ENCODE measurements at regions of chr10 and their contacts with region 1.

Region 1: GRCh38 chr10:26556748-26557640 is 118.9 kb downstream of the APBB1IP start:
- DNase-seq: peak in 2 of 10 donors; percentile 6 to 36
- H3K4me3 ChIP-seq: no peak overlapping the region
- H3K27ac ChIP-seq: peak overlapping the region in 2 of 59 donors; percentile 12 to 36
- H3K27me3 ChIP-seq: peaks cover 0 to 44% (median 4%) of the 10 kb centered on the region in 45 donors
- CTCF ChIP-seq: peak; percentile 60 to 93 (median 82)

Region 2: DNA sequence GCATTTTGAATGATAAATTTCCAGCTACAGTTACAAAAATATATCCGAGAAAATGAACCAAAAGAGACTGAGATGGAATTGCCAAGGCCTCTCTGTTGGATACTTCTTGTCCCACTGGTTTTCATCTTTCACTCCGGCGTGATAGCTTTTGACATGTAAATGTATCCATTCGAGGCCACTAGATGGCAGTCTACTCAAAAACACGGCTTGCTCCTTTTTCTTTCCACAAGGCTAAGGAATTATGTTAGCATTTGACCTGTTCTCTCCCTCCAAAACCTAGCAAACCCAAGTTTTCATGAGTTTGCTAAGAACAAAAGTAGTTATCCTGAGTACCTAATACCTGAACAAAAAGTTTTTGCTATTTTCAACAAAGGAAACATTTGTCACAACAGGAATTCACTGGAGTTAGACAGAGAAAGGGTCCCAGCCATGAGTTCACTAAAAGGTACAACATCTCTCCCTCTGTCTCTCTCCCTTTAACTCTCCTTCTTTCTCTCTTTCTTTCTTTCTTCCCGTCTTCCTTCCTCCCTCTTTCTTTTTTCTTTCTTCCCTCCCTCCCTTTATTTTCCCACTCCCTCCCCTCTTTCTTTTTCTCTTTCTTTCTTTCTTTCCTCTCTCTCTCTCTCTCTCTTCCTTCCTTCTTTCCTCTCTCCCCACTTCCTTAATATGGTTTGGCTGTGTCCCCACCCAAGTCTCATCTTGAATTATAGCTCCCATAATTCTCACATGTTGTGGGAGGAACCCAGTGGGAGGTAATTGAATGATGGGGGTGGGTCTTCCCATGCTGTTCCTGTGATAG is 830.9 kb before region 1 on chr10:
- intact Hi-C with region 1: loop called (anchors 10 kb)
- DNase-seq: peak in 2 of 10 donors; percentile 32 to 52
- H3K4me3 ChIP-seq: no peak overlapping the region
- H3K27ac ChIP-seq: no peak overlapping the region
- H3K27me3 ChIP-seq: peaks cover 0 to 7% (median 0%) of the 10 kb centered on the region in 45 donors
- CTCF ChIP-seq: peak; percentile 55 to 86 (median 74)

Region 3: GRCh38 chr10:25758041-25758457 is 798.9 kb before region 1 on chr10:
- intact Hi-C with region 1: loop called (anchors 10 kb)
- DNase-seq: peak in 3 of 10 donors; percentile 11 to 53 (median 17)
- H3K4me3 ChIP-seq: no peak overlapping the region
- H3K27ac ChIP-seq: peak overlapping the region in 1 of 59 donors; percentile 8
- H3K27me3 ChIP-seq: no peaks in the 10 kb centered on the region
- CTCF ChIP-seq: peak; percentile 23 to 78 (median 66)

Region 4: GRCh38 chr10:25875556-25876165 is 681.3 kb before region 1 on chr10:
- intact Hi-C with region 1: loop called in 1 of 2 experiments (anchors 5 kb)
- DNase-seq: peak; percentile 37 to 86 (median 69)
- H3K4me3 ChIP-seq: no peak overlapping the region
- H3K27ac ChIP-seq: no peak overlapping the region
- H3K27me3 ChIP-seq: peaks cover 0 to 7% (median 0%) of the 10 kb centered on the region in 45 donors
- CTCF ChIP-seq: peak; percentile 66 to 94 (median 82)

Region 5: DNA sequence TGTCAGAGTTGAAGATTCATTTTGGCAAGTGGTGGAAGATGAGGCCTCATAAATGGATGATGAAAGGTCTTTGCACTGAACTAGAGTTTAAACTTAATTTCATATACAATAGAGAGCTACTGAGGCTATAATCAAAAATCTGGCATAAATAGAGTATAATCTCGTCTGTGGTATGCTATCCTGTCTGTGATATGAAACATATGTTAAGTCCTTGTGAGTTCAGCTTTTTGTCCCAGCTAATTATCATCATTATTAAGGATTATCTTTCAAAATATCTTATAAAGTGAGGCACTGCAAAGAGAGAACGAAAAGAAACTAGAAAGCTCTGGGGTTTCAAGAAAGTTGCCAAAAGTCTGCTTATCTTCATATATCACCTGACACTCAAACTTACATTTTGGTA is 257.0 kb before region 1 on chr10:
- intact Hi-C with region 1: no loop called
- DNase-seq: no peak
- H3K4me3 ChIP-seq: no peak overlapping the region
- H3K27ac ChIP-seq: no peak overlapping the region
- H3K27me3 ChIP-seq: peaks cover 0 to 5% (median 0%) of the 10 kb centered on the region in 45 donors
- CTCF ChIP-seq: no peak

Region 6: DNA sequence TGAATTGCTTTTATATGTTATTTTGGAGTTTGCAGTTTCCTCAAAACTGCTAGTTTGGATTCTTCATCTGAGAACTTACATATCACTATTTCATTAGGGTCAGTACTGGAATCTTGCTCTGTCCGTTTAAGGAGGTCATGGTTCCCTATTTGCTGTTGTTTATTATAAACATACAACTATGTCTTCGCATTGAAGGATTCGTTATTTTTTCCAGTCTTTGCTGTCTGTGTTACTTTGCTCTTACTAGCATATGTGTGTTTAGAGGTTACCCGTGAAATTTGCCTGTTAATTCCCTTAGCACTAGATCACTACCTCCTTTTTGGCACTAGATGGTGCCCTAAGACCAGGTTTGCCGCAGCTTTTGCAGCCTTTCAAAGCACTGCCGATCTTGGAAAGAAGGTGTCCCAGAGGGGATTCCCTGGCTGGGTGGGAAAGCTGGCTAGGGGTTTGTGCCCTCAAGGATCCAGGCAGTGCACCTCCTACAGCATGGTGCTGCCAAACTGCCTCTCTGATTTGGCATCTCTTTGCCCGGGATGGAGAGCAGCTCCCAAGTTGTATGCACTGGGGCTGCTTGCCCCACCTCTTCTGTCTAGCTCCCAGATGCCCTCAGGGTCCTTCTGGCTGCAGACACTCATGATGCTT is 221.9 kb before region 1 on chr10:
- intact Hi-C with region 1: loop called in 1 of 2 experiments (anchors 10 kb)
- DNase-seq: no peak
- H3K4me3 ChIP-seq: peak overlapping the region in 15 of 59 donors; percentile 4 to 36 (median 20)
- H3K27ac ChIP-seq: no peak overlapping the region
- H3K27me3 ChIP-seq: peaks cover 0 to 19% (median 0%) of the 10 kb centered on the region in 45 donors
- CTCF ChIP-seq: peak in 52 of 56 donors; percentile 22 to 66 (median 45)

Region 7: GRCh38 chr10:26682931-26683330 is 125.9 kb after region 1 on chr10:
- intact Hi-C with region 1: no loop called
- DNase-seq: no peak
- H3K4me3 ChIP-seq: no peak overlapping the region
- H3K27ac ChIP-seq: no peak overlapping the region
- H3K27me3 ChIP-seq: peaks cover 0 to 13% (median 0%) of the 10 kb centered on the region in 45 donors
- CTCF ChIP-seq: no peak